Caco-2 (cell line): ENCODE measurements at regions of chr10 and their contacts with region 1.

Region 1: GRCh38 chr10:4437646-4438190 is 388.3 kb upstream of the AKR1E2 start:
- DNase-seq: no peak
- H3K4me3 ChIP-seq: no peak overlapping the region
- H3K4me3 Mint-ChIP-seq: no peak overlapping the region
- H3K27ac Mint-ChIP-seq: no peak overlapping the region
- H3K4me1 ChIP-seq: peaks cover 14% of the 10 kb centered on the region
- H3K4me1 Mint-ChIP-seq: peaks cover 15% of the 10 kb centered on the region
- H3K27me3 ChIP-seq: no peaks in the 10 kb centered on the region
- H3K27me3 Mint-ChIP-seq: peaks cover 10% of the 10 kb centered on the region
- CTCF ChIP-seq: no peak

Region 2: DNA sequence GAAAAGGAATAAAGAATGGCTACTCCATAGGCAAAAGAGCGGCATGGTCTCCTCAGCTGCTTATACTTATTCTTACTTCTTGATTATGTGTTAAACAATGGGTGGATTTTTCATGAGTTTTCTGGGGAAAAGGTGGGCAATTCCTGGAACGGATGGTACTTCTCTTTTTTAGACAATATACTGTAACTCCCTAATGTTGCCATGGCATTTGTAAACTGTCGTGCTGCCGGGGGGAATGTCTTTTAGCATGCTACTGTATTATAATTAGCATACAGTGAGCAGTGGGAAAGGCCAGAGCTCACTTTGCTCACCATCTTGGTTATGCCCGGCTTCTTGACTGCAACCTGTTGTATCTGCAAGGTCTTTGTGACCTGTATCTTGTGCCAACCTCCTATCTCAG is 16.2 kb after region 1 on chr10:
- CTCF ChIA-PET with region 1: no interaction called
- POLR2A ChIA-PET with region 1: no interaction called
- intact Hi-C with region 1: loop called (anchors 2 kb)
- DNase-seq: no peak
- H3K4me3 ChIP-seq: no peak overlapping the region
- H3K4me3 Mint-ChIP-seq: no peak overlapping the region
- H3K27ac Mint-ChIP-seq: no peak overlapping the region
- H3K4me1 ChIP-seq: peaks cover 28% of the 10 kb centered on the region
- H3K4me1 Mint-ChIP-seq: peaks cover 15% of the 10 kb centered on the region
- H3K27me3 ChIP-seq: no peaks in the 10 kb centered on the region
- H3K27me3 Mint-ChIP-seq: no peaks in the 10 kb centered on the region
- CTCF ChIP-seq: no peak

Region 3: DNA sequence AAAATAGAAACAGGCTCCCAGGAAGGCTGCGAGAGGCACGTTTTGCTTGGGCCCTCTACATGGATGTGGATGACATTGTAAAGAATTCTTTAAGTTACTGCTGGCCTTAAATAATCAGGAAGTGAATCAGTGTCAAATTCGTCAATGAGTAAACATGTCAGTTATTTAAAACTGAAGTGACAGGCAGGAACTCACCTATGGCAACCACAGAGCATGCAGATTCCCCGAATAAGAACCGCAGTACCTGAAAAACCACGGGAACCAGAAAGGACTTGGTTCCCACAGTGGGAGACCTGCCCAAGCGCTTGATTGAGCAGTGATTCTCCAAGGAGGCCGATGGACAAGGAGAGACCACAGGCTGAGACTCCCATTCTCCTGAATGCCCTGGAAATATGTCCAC is 37.1 kb after region 1 on chr10:
- CTCF ChIA-PET with region 1: no interaction called
- POLR2A ChIA-PET with region 1: no interaction called
- intact Hi-C with region 1: no loop called
- DNase-seq: no peak
- H3K4me3 ChIP-seq: no peak overlapping the region
- H3K4me3 Mint-ChIP-seq: no peak overlapping the region
- H3K27ac Mint-ChIP-seq: no peak overlapping the region
- H3K4me1 ChIP-seq: no peaks in the 10 kb centered on the region; the same call in 1 of the 2 replicates
- H3K4me1 Mint-ChIP-seq: no peaks in the 10 kb centered on the region
- H3K27me3 ChIP-seq: no peaks in the 10 kb centered on the region
- H3K27me3 Mint-ChIP-seq: no peaks in the 10 kb centered on the region
- CTCF ChIP-seq: no peak

Region 4: DNA sequence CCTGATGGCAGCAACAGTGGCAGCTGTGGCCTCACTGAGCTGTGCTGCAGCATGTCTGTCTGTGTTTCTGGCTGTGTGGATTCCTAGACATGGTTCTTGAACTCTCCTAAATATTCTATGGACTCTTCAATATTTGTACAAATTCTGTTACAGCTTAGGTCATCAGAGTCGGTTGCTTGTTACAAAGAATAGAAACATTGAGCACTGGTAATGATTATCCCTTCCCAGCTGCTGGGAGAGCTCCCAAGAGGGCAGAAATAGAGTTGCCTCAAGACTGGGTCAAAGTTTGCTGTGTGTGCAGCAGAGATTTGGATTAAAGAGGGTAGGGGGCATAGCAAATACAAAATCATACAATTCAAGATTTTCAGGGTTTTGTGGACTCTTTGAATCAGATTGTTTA is 51.2 kb after region 1 on chr10:
- CTCF ChIA-PET with region 1: no interaction called
- POLR2A ChIA-PET with region 1: no interaction called
- intact Hi-C with region 1: no loop called
- DNase-seq: no peak
- H3K4me3 ChIP-seq: no peak overlapping the region
- H3K4me3 Mint-ChIP-seq: no peak overlapping the region
- H3K27ac Mint-ChIP-seq: no peak overlapping the region
- H3K4me1 ChIP-seq: no peaks in the 10 kb centered on the region
- H3K4me1 Mint-ChIP-seq: no peaks in the 10 kb centered on the region
- H3K27me3 ChIP-seq: no peaks in the 10 kb centered on the region
- H3K27me3 Mint-ChIP-seq: peaks cover 5% of the 10 kb centered on the region
- CTCF ChIP-seq: no peak

Region 5: DNA sequence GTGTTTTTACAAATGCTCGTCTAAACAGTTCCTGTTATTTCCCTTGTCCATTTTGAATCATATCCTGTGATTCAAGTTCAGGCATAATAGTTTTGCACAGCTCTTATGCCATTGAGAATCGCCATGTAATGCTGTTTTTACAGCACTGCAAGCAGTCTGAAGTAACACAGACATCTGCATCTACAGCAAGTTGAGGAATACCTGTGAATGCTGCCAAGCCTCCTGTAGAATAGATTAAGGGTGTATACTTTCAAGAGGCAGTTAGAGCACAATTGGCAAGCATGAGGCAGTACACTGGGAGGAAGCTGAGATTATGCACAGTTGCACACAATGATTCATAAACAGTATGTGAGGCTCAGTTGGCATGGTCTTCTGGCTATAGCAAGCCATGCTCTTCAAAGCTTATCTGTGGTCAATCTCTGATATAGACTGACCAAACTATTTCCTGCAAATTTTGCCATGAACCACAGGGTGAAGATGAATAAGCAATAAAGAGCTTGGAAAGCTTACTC is 266.4 kb after region 1 on chr10:
- CTCF ChIA-PET with region 1: no interaction called
- POLR2A ChIA-PET with region 1: interaction called, 10 read pairs
- intact Hi-C with region 1: no loop called
- DNase-seq: no peak
- H3K4me3 ChIP-seq: no peak overlapping the region
- H3K4me3 Mint-ChIP-seq: no peak overlapping the region
- H3K27ac Mint-ChIP-seq: no peak overlapping the region
- H3K4me1 ChIP-seq: no peaks in the 10 kb centered on the region
- H3K4me1 Mint-ChIP-seq: no peaks in the 10 kb centered on the region
- H3K27me3 ChIP-seq: no peaks in the 10 kb centered on the region
- H3K27me3 Mint-ChIP-seq: peaks cover 6% of the 10 kb centered on the region
- CTCF ChIP-seq: no peak